Mucosa of descending colon (tissue), 3 donors: ENCODE measurements at regions of chr1 and their contacts with region 1.

Region 1: GRCh38 chr1:224259936-224260335 is 70.0 kb downstream of the NVL start:
- DNase-seq: no peak
- ATAC-seq: no peak
- H3K4me3 ChIP-seq: no peak overlapping the region
- H3K4me1 ChIP-seq: no peaks in the 10 kb centered on the region
- CTCF ChIP-seq: no peak

Region 2: DNA sequence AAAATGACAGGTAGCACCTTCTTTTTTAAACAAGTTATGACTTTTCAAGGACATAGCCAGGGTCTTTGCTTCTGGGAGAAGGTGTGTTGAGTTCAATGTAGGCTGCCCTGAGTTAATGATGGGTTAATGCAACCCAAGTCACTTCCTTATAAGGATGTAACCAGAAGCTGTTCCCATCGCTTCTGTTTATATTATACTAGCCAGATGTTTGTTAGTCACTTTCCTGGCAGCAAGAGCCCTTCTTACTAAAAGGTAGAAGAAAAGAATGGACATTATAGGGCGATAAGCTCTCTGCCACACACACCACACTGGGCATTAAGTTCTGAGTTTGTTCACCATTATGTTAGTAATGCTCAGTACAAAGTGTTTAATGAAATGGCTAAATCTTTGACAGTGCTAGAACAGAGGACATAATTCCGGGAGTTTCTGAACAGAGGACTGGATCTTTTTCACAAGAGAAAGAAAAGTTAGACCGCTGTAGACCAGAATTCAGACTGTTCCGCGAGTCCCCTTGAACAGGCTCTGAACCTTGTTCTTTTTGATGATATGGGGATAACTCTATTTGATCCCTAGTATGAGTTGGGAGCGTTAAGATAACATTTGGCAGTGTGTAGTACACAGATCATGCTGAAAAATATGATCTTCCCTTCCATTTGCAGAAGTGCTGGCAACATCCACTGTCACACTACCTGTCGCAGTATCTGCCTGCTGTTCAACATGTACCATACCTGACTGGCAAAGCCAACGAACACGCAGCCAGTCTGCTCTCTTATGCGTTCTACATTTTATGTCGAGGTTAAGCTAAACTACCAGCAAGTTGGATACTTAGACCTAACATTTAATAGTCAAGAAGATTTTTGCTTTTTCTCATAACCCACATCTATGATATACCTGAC is 35.9 kb before region 1 on chr1:
- intact Hi-C with region 1: loop called in 1 of 2 experiments (anchors 5 kb)
- DNase-seq: no peak
- ATAC-seq: peak; percentile 76
- H3K4me3 ChIP-seq: no peak overlapping the region
- H3K4me1 ChIP-seq: no peaks in the 10 kb centered on the region
- CTCF ChIP-seq: no peak

Region 3: DNA sequence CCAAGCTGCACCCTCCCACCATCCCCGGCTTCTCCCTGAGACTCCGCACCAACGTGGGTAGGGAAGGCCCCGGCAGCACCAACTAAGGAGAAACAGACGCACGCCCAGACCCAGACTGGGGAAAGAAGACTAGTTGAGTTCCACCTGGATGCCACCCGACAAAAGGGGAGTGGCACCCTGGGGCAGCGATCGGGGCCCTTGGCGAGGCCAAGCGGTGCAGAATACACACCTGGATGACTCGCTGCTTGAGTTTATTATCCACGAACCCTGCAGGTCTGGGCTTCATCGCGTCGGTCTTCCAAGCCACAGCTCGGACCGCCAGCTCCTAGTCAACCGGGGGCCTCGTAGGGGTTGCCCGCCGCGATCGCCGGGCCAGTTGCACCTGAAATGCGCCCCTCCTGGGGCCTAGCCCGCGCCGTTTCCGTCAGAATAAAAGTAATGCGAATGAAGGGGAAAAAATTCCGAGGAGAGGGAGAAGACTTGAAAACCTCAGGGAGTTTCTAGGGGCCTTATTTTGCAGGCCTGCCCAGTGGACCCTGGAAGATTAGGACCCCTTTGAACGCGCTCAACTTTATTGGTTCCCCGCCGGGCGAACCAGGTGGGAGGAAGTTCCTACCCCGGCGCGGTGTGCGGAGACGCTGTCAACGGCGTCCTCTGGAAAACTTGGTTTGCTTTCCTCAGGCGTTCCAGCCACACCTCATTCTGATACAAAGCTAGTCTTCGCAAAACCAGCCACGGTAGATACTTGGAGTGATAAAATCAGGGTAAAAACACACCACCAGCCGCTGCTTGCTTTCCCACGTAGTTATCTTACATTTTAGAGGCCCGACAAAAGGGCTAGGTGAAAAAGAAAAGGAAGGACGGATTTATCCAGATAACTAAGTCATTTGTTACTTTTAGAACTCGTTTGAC is 70.2 kb after region 1 on chr1 and contains the start of gene NVL:
- intact Hi-C with region 1: loop called in 1 of 2 experiments (anchors 10 kb)
- DNase-seq: peak; percentile 88 to 89 (median 89)
- ATAC-seq: peak; percentile 96
- H3K4me3 ChIP-seq: peak within 1 kb of the TSS; percentile 78
- H3K4me1 ChIP-seq: peaks cover 17% of the 10 kb centered on the region
- CTCF ChIP-seq: no peak
- total RNA-seq, gene NVL: 32.2 to 45.6 (median 34.7) TPM

Region 4: GRCh38 chr1:224770336-224770693 is 510.4 kb after region 1 on chr1:
- intact Hi-C with region 1: no loop called
- DNase-seq: no peak
- ATAC-seq: no peak
- H3K4me3 ChIP-seq: no peak overlapping the region
- H3K4me1 ChIP-seq: no peaks in the 10 kb centered on the region
- CTCF ChIP-seq: no peak